ENCODE measurements at regions of chr4 and their contacts with region 1.

Region 1: GRCh38 chr4:112515304-112516067 is 494 bp downstream of the NEUROG2 start:
- DNase-seq: peak; percentile 69
- CTCF ChIP-seq: no peak

Region 2: DNA sequence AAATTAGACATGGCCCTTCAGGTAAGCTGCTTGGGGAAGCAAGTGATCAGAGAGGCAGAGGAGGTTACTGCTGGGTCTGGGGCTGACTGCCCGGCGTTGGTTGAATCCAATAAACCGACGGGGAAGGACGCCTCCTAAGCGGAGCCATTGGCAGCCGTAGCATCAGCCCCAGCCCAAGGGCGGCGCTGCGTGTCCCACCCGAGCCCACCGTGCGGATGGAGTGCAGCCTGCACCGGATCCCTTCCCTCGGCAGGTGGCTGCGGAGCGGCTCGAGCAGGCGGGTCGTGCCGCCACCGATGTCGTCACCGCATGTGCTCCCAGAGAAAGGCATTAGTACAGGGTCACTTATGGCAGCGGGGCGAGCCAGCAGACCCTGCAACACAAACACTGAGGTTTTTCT is 136.2 kb before region 1 on chr4:
- CTCF ChIA-PET with region 1: no interaction called
- POLR2A ChIA-PET with region 1: no interaction called
- DNase-seq: no peak
- CTCF ChIP-seq: no peak

Region 3: GRCh38 chr4:112532267-112532666 is 16.8 kb after region 1 on chr4:
- CTCF ChIA-PET with region 1: interaction called, 11 read pairs
- POLR2A ChIA-PET with region 1: no interaction called
- DNase-seq: no peak
- CTCF ChIP-seq: no peak

Region 4: DNA sequence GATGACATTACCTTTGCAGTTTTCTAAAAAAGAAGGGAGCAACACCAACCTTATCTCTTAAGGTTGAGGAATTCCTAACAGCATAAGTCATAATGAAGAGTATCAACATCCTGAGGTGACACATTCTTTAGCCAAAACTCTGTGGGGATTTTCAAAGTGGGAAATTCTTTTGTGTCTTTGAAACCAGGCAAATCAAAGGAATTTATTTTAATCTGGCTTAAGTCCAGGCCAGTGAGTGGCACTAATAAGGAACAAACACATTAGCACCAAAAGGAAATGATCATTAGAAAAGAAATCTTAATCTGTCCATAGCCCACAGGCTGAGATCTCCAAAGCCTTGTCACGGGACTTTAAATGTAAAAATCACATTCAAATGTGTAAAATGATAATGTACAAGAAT is 231.6 kb after region 1 on chr4:
- CTCF ChIA-PET with region 1: no interaction called
- POLR2A ChIA-PET with region 1: no interaction called
- DNase-seq: no peak
- CTCF ChIP-seq: no peak